Heart right ventricle (tissue), 16 donors: ENCODE measurements at regions of chr3 and their contacts with region 1.

Region 1: DNA sequence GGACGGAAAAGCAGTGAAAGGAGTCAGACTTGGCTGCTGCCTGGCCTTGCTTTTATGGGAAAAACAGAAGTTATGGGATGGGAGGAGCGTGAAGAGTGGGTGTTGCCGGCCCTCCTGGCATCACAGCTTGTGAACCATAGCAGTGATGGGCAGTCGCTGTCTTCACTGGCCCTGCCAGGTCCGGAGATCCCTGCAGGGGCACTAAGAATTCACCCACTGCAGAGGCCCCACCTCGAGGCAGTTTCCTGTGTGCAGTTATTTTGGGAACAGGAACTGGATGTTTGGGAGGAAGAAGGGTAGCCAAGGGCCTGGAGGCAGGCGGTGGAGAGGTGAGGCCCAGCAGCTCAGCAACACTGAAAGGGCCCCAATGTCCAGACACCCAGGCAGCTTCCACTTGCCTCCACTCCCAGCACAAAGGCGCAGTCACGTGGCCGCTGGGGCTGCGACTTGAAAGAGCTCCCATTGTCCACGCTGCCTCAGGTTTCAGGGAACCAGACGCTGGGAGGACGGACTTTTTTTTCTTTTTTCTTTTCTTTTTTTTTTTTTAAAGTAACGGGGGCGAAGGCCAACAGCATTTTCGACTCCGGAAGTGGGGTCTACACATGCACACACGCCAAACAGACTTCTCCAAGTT is 255.6 kb downstream of the ZNF621 start:
- DNase-seq: peak; percentile 78 to 86
- ATAC-seq: peak; percentile 84 to 93 (median 88)
- H3K4me3 ChIP-seq: peak overlapping the region in 7 of 10 donors; percentile 3 to 33 (median 22)
- H3K27ac ChIP-seq: peak overlapping the region; percentile 78 to 88 (median 82)
- H3K4me1 ChIP-seq: peaks cover 15 to 34% (median 23%) of the 10 kb centered on the region in 9 donors
- H3K27me3 ChIP-seq: no peaks in the 10 kb centered on the region
- CTCF ChIP-seq: peak in 2 of 9 donors; percentile 10 to 26

Region 2: GRCh38 chr3:40690749-40691451 is 89.5 kb before region 1 on chr3:
- intact Hi-C with region 1: loop called in 2 of 10 experiments (anchors 2 to 10 kb)
- DNase-seq: peak; percentile 77 to 79
- ATAC-seq: peak; percentile 83 to 95 (median 86)
- H3K4me3 ChIP-seq: no peak overlapping the region
- H3K27ac ChIP-seq: peak overlapping the region in 9 of 10 donors; percentile 24 to 80 (median 61)
- H3K4me1 ChIP-seq: peaks cover 6 to 60% (median 47%) of the 10 kb centered on the region in 9 donors
- H3K27me3 ChIP-seq: no peaks in the 10 kb centered on the region
- CTCF ChIP-seq: no peak

Region 3: GRCh38 chr3:40877631-40878463 is 97.4 kb after region 1 on chr3:
- intact Hi-C with region 1: loop called in 3 of 10 experiments (anchors 5 to 10 kb)
- DNase-seq: peak; percentile 69 to 81
- ATAC-seq: peak; percentile 81 to 94 (median 91)
- H3K4me3 ChIP-seq: peak overlapping the region in 1 of 10 donors; percentile 23
- H3K27ac ChIP-seq: peak overlapping the region; percentile 60 to 88 (median 79)
- H3K4me1 ChIP-seq: peaks cover 18 to 51% (median 32%) of the 10 kb centered on the region in 9 donors
- H3K27me3 ChIP-seq: no peaks in the 10 kb centered on the region
- CTCF ChIP-seq: no peak